Endothelial cell of umbilical vein (primary cell): ENCODE measurements at regions of chr7 and their contacts with region 1.

Region 1: DNA sequence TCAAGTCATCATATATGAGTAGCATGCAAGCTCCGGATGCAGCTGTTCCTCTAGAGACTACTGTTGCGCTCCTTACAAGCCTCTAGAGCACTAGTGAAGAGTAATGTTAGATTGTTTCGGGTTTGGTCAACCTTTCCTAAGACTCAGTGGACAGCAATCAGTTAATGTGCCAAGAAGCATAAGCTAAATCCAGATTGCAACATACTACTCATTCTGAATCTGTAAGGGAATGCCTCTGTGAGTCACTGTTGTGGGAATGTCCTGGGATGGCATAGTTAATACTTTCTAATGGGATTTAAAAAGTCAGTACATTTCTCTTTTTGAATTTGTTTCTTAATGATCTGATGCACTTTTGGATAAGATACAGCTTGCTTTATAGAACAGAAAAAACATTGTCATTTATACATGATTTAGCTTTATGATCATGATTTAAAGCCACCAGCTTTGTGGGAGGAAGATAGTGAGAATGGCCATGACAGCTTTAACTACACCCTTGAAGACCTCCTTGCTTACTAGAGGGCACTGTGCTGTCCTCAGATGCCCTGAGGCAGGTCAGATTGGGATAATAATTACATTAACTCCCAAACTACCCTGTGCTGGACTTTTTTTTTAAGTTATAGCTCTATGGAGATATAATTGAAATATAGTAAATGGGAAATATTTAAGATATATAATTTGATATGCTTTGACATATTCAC is 138.4 kb downstream of the SDK1 start:
- DNase-seq: peak; percentile 57
- H3K4me3 ChIP-seq: no peak overlapping the region
- H3K27ac ChIP-seq: no peak overlapping the region
- H3K4me1 ChIP-seq: peaks cover 27% of the 10 kb centered on the region
- H3K27me3 ChIP-seq: no peaks in the 10 kb centered on the region
- CTCF ChIP-seq: no peak
- POLR2A ChIP-seq: no peak

Region 2: GRCh38 chr7:3294432-3295100 is 144.9 kb before region 1 on chr7:
- CTCF ChIA-PET with region 1: no interaction called
- POLR2A ChIA-PET with region 1: no interaction called
- dilution Hi-C with region 1: no loop called
- intact Hi-C with region 1: no loop called
- DNase-seq: no peak
- H3K4me3 ChIP-seq: no peak overlapping the region
- H3K27ac ChIP-seq: no peak overlapping the region
- H3K4me1 ChIP-seq: no peaks in the 10 kb centered on the region
- H3K27me3 ChIP-seq: no peaks in the 10 kb centered on the region
- CTCF ChIP-seq: no peak
- POLR2A ChIP-seq: no peak

Region 3: GRCh38 chr7:3386423-3387190 is 52.9 kb before region 1 on chr7:
- CTCF ChIA-PET with region 1: no interaction called
- POLR2A ChIA-PET with region 1: no interaction called
- dilution Hi-C with region 1: no loop called
- intact Hi-C with region 1: loop called (anchors 5 kb)
- DNase-seq: no peak
- H3K4me3 ChIP-seq: no peak overlapping the region
- H3K27ac ChIP-seq: no peak overlapping the region
- H3K4me1 ChIP-seq: no peaks in the 10 kb centered on the region
- H3K27me3 ChIP-seq: no peaks in the 10 kb centered on the region
- CTCF ChIP-seq: no peak
- POLR2A ChIP-seq: no peak

Region 4: GRCh38 chr7:3493499-3493898 is 54.0 kb after region 1 on chr7:
- CTCF ChIA-PET with region 1: no interaction called
- POLR2A ChIA-PET with region 1: no interaction called
- dilution Hi-C with region 1: no loop called
- intact Hi-C with region 1: loop called (anchors 2 kb)
- DNase-seq: peak; percentile 64
- H3K4me3 ChIP-seq: peak overlapping the region in 1 of 3 experiments; percentile 15
- H3K27ac ChIP-seq: peak overlapping the region; percentile 46
- H3K4me1 ChIP-seq: peaks cover 13% of the 10 kb centered on the region
- H3K27me3 ChIP-seq: no peaks in the 10 kb centered on the region
- CTCF ChIP-seq: no peak
- POLR2A ChIP-seq: no peak

Region 5: GRCh38 chr7:3559278-3559677 is 119.8 kb after region 1 on chr7:
- CTCF ChIA-PET with region 1: no interaction called
- POLR2A ChIA-PET with region 1: no interaction called
- dilution Hi-C with region 1: no loop called
- intact Hi-C with region 1: loop called (anchors 5 kb)
- DNase-seq: peak; percentile 88
- H3K4me3 ChIP-seq: peak overlapping the region in 2 of 3 experiments; percentile 7 to 47
- H3K27ac ChIP-seq: peak overlapping the region; percentile 62
- H3K4me1 ChIP-seq: peaks cover 20% of the 10 kb centered on the region
- H3K27me3 ChIP-seq: no peaks in the 10 kb centered on the region
- CTCF ChIP-seq: no peak
- POLR2A ChIP-seq: no peak

Region 6: DNA sequence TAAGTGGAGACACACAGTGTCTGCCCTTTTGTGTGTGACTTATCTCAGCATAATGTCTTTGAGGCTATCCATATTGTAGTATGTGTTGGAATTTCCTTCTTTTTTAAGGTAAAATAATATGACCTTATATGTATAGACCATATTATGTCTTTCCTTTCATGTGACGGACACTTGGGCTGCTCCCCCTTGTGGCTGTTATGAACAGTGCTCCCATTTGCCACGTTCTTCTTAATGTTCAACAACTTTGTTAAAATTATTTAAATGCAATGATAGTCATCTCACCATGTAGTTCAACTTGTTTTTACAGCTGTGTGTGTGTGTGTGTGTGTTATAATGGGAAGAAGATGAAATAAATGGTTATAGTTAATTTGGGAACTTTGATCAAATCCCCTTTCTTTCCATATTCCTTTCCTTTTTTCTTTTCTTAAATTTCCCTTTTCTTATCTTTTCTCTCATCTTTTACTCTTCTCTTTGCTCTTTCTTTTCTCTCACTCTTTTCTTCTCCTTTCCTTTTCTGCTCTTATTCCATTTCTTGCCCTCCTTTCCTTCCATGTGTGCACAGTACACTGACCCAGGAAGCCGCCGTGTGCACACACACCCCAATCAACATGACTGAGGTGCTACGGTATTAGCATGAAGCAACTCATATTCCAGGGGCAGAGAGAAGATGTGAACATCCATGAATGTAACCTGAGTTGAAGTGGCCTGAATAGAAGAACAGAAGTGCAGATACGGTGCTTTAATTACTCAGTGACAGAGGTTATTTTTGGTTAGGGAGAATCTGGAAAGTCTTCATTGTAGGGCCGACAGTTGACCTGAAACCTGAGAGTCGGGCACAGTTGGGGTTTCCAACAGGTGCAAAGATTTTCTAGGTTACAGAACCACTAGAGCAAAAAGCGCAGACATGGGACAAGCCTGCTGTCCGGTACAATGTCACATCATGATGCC is 458.2 kb after region 1 on chr7:
- CTCF ChIA-PET with region 1: no interaction called
- POLR2A ChIA-PET with region 1: no interaction called
- dilution Hi-C with region 1: no loop called
- intact Hi-C with region 1: loop called (anchors 5 kb)
- DNase-seq: peak; percentile 55
- H3K4me3 ChIP-seq: no peak overlapping the region
- H3K27ac ChIP-seq: no peak overlapping the region
- H3K4me1 ChIP-seq: no peaks in the 10 kb centered on the region
- H3K27me3 ChIP-seq: no peaks in the 10 kb centered on the region
- CTCF ChIP-seq: peak; percentile 49 to 69
- POLR2A ChIP-seq: no peak